Heart left ventricle (tissue), 16 donors: ENCODE measurements at regions of chr1 and their contacts with region 1.

Region 1: GRCh38 chr1:19199969-19200604 is 10.0 kb downstream of the UBR4 start:
- DNase-seq: no peak
- ATAC-seq: no peak
- H3K4me3 ChIP-seq: no peak overlapping the region
- H3K27ac ChIP-seq: peak overlapping the region in 1 of 12 donors; percentile 7
- H3K4me1 ChIP-seq: peaks cover 0 to 82% (median 32%) of the 10 kb centered on the region in 12 donors
- H3K27me3 ChIP-seq: no peaks in the 10 kb centered on the region
- CTCF ChIP-seq: no peak
- POLR2A ChIP-seq: no peak

Region 2: DNA sequence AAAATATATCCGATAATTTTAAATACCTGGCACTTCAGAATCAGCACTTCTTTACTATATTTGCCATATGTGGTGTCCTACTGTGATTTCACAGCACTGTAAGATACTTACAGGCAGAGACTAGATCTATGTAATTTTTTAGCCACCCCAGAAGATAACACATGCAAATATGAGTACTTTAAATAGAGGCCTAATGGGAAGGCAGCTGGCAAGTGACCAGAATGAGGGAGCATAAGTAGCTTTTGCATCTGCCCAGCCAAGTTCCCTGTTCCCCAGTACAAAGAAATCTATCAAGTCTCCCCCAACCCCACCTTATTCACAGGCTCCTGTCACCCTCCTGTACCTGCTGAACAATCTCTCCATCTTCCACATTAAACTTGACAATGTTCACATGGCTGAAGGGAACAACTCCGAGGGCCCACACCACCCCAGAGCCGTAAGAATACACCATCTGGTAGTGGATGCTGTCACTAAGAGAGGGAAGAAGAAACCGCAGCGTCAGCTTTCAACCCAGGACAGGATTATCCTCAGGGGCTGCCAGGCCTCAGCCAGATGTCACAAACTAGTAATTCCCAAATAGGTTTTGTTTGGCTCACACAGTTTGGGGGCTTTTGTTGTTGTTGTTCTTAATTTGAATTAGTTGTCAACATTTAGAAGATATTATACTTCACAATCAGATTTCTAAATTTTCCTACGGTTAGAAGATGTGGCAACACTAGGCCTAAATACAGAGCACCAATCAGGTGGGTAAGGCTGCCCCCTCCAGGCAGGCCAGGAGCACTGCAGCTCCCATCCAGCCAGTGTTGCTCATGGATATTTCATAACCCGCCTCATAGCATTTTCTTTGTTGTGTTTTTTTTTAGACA is 40.8 kb after region 1 on chr1:
- intact Hi-C with region 1: loop called in 2 of 10 experiments (anchors 5 to 10 kb)
- DNase-seq: peak in 4 of 5 donors; percentile 44 to 67 (median 58)
- ATAC-seq: peak; percentile 75 to 93 (median 92)
- H3K4me3 ChIP-seq: no peak overlapping the region
- H3K27ac ChIP-seq: no peak overlapping the region
- H3K4me1 ChIP-seq: peaks cover 0 to 6% (median 0%) of the 10 kb centered on the region in 12 donors
- H3K27me3 ChIP-seq: no peaks in the 10 kb centered on the region
- CTCF ChIP-seq: peak; percentile 85 to 99 (median 96)
- POLR2A ChIP-seq: no peak

Region 3: GRCh38 chr1:19273106-19273843 is 73.2 kb after region 1 on chr1:
- intact Hi-C with region 1: no loop called
- DNase-seq: no peak
- ATAC-seq: peak in 2 of 4 donors; percentile 14 to 17
- H3K4me3 ChIP-seq: peak overlapping the region in 2 of 12 donors; percentile 12 to 16
- H3K27ac ChIP-seq: no peak overlapping the region
- H3K4me1 ChIP-seq: peaks cover 0 to 5% (median 0%) of the 10 kb centered on the region in 12 donors
- H3K27me3 ChIP-seq: peaks cover 0 to 13% (median 0%) of the 10 kb centered on the region in 9 donors
- CTCF ChIP-seq: no peak
- POLR2A ChIP-seq: no peak

Region 4: DNA sequence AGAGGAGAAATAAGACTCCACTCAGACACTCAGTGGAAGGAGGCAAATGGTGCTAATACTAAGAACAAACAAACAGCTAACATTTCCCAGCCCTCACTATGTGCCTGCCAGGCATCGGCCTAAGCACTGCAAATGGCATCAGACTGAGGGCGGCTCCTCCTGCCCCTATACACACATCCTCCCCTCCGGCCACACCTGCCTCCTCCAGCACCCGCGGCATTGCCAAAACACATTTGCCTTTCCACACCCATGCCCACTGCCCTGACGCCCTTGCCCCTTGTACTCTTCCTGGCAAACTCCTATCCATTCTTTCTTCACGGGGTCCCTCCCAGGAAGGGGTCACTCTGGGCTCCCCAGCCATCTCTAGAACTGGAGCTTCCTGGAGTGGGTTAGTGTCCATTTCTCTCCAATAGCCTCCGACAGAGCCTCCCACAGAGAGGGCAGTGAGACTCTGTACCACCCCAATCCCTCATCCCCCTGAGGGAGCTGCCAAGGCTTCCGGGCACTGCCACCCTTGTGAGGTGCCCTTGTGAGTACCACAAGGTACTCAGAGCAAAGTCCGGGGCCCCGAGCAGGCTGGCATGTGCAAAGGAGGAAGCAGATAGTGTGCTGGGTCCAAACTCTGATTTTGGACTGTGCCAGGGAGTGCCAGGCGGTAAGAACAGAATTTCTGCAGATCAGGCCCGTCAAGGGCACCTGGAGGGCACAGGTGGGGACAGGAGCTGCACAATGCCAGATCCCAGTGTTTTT is 87.5 kb after region 1 on chr1:
- intact Hi-C with region 1: no loop called
- DNase-seq: no peak
- ATAC-seq: peak in 1 of 4 donors; percentile 5
- H3K4me3 ChIP-seq: no peak overlapping the region
- H3K27ac ChIP-seq: no peak overlapping the region
- H3K4me1 ChIP-seq: peaks cover 0 to 21% (median 6%) of the 10 kb centered on the region in 12 donors
- H3K27me3 ChIP-seq: peaks cover 0 to 5% (median 0%) of the 10 kb centered on the region in 9 donors
- CTCF ChIP-seq: no peak
- POLR2A ChIP-seq: no peak